Psoas muscle (tissue), 8 donors: ENCODE measurements at regions of chr14 and their contacts with region 1.

Region 1: DNA sequence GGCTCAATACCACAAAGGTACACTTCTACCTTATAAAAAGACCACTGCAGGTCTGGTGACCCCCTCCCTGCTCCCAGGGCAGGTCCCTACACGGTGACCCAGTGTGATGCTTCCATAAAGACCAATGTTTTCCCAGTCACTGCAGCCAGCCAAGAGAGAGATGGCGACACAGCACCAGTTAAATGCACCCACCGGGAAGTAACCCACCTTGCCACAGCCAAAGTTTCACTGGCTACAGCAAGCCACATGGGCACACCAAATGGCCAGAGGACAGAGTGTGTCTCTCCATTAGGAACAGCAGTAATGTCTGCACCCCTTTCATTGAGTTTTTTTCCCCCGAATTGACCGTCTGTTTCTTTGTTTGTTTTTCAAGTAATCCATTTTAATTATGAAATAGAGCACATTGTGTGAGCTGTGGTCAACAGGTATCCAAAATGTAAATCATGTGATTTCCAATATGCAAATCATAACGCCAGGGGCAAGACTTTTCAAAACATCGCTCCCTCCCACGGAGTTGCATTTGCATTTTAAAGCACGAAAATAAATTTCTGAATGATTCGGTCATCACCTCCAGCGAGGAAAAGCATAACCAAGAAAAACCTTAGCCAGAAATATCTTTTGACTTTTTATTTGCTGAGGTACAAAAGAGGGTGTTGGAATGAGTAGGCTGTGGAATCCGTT is 48.9 kb upstream of the EML1 start:
- DNase-seq: no peak
- ATAC-seq: no peak
- H3K4me3 ChIP-seq: no peak overlapping the region
- H3K27ac ChIP-seq: no peak overlapping the region
- H3K4me1 ChIP-seq: peaks cover 54% of the 10 kb centered on the region
- H3K27me3 ChIP-seq: no peaks in the 10 kb centered on the region
- CTCF ChIP-seq: no peak

Region 2: GRCh38 chr14:99786511-99786989 is 42.2 kb after region 1 on chr14:
- intact Hi-C with region 1: loop called (anchors 2 to 5 kb)
- DNase-seq: no peak
- ATAC-seq: peak in 3 of 4 donors; percentile 46 to 82 (median 51)
- H3K4me3 ChIP-seq: no peak overlapping the region
- H3K27ac ChIP-seq: no peak overlapping the region
- H3K4me1 ChIP-seq: no peaks in the 10 kb centered on the region
- H3K27me3 ChIP-seq: no peaks in the 10 kb centered on the region
- CTCF ChIP-seq: no peak